ENCODE measurements at regions of chr20 and their contacts with region 1.

Region 1: DNA sequence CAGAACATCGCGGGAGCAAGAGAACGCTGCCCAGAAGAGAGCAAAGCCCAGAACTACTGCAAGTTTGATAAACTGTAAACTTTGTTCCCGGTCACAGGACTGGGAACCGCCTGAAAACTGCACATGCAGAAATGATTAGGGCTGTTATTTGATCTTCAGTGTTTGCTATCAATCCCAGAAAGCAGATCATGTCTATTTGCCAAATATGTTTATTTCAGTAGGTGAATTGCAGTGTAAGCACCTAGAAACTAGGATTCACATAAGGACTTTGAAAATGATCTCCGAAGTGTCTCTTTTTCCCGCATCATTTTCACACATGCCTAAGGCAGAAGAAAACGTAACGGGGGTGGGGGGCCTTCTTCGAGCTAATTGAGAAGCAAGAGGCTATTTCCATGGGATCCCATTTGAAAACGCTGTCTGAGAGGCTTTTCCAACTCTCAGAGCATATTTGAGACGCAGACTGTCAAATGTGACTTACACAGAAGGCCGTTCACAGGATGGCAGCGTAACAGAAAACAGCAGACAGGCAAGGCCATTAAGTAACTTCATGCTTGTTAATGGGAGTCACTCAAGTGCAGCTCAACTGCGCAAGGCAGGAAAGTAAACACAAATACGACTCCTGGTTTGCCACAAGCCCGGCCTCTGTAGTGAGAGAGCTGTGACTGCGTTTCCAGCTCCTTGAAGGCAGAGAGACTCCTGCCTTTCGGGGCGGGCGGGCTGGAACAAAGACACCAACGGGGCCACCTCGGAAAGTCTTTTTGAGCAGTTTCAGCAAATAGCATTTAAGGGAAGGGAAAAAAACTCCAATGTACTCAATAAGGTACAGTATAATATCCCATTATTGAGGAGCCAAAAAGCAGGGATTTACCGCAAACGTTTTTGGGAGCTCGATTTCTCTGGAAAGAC is 144.7 kb upstream of the ZNF217 start:
- DNase-seq: peak; percentile 85 to 97
- H3K4me3 ChIP-seq: peak overlapping the region; percentile 62
- H3K27ac ChIP-seq: peak overlapping the region; percentile 98
- H3K4me1 ChIP-seq: peaks cover 89% of the 10 kb centered on the region
- H3K27me3 ChIP-seq: no peaks in the 10 kb centered on the region
- CTCF ChIP-seq: no peak

Region 2: GRCh38 chr20:53578492-53579222 is 159.6 kb before region 1 on chr20:
- CTCF ChIA-PET with region 1: no interaction called
- POLR2A ChIA-PET with region 1: interaction called, 5 read pairs
- intact Hi-C with region 1: loop called (anchors 1 kb)
- DNase-seq: peak; percentile 61 to 77
- H3K4me3 ChIP-seq: peak overlapping the region; percentile 49
- H3K27ac ChIP-seq: peak overlapping the region; percentile 91
- H3K4me1 ChIP-seq: peaks cover 64% of the 10 kb centered on the region
- H3K27me3 ChIP-seq: no peaks in the 10 kb centered on the region
- CTCF ChIP-seq: peak; percentile 96

Region 3: GRCh38 chr20:53656293-53657202 is 81.7 kb before region 1 on chr20:
- CTCF ChIA-PET with region 1: no interaction called
- POLR2A ChIA-PET with region 1: interaction called, 10 read pairs
- intact Hi-C with region 1: no loop called
- DNase-seq: peak in 1 of 2 experiments; percentile 78
- H3K4me3 ChIP-seq: peak overlapping the region; percentile 12; the same call in 1 of the 2 replicates
- H3K27ac ChIP-seq: peak overlapping the region; percentile 84
- H3K4me1 ChIP-seq: peaks cover 65% of the 10 kb centered on the region
- H3K27me3 ChIP-seq: no peaks in the 10 kb centered on the region
- CTCF ChIP-seq: no peak

Region 4: DNA sequence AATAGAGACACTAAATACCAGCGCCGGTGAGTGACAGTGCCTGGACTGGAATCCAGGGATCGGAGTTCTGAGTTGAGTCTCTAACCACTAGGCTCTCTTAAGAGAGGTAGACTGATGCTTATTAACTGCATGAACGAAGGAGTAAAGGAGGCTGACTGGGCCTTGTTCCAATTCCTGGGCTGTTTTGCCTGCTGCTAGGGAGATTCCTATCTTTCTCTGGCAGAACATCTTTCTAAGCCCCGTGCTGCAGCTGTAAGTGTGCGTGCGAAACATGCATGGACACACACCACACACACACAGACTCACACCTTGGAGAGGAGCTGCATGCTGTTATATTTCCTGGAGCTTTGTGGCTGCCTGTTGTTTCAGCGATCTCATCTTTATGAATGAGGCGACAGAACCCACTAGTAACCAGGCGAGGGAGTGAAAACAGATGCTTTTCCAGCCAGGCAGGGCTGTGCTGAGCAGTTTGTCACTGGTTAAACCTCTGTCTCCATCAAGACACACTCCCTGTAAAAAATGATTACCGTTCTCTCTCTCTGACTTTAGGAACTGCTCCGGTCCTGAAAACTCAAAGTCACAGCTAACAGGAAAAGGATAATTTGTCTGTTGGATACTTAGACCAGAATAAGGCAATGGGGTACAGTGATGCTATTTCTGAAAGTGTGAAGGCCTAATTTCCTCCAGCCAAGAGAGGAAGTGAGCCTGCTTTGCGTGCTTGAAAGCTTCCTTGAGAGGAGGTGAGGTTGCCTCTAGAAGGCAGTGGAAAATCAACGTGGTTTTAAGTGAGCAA is 12.7 kb after region 1 on chr20:
- CTCF ChIA-PET with region 1: no interaction called
- POLR2A ChIA-PET with region 1: interaction called, 14 read pairs
- intact Hi-C with region 1: loop called (anchors 1 kb)
- DNase-seq: no peak
- H3K4me3 ChIP-seq: no peak overlapping the region
- H3K27ac ChIP-seq: peak overlapping the region; percentile 98
- H3K4me1 ChIP-seq: peaks cover 83% of the 10 kb centered on the region
- H3K27me3 ChIP-seq: no peaks in the 10 kb centered on the region
- CTCF ChIP-seq: no peak

Region 5: GRCh38 chr20:53828682-53829254 is 90.5 kb after region 1 on chr20:
- CTCF ChIA-PET with region 1: no interaction called
- POLR2A ChIA-PET with region 1: interaction called, 6 read pairs
- intact Hi-C with region 1: loop called (anchors 1 kb)
- DNase-seq: peak in 1 of 2 experiments; percentile 49
- H3K4me3 ChIP-seq: peak overlapping the region; percentile 56
- H3K27ac ChIP-seq: peak overlapping the region; percentile 100
- H3K4me1 ChIP-seq: peaks cover 55% of the 10 kb centered on the region
- H3K27me3 ChIP-seq: no peaks in the 10 kb centered on the region
- CTCF ChIP-seq: peak; percentile 46

Region 6: DNA sequence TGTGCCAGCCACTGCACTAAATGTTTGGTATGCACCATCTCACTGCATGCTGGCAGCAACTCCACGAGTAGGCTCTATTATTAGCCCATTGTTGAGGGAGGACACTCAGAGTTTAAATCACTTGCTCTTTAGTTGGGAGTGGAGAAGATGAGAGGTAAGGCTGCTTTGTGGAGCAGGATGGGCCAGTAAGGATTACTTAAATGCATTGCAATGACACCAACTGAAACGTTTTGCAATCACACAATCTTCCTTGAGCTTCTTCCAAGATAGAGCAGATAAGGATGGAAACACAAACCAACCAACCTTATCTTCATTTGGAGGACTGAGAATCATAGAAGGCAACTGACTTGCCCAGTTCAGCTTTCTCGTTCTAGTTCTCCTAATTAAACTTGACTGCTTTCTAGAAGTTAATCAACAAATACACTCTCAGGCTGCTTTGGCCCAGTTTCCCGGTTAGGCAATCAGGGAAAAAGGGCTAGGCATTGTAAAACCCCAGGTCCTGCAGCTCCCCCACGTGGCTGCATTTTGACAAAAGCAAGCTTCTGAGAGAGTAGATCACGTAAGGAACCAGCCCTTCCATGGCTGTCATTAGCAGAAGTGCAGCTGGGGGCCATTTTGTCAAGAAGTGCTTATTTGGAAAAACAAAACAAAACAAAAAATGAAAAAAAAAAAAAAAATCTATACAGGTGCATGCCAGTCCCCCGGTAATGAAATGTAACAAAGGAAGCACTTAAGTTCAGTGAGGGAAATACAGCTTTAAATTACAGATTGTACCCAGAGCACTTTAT is 201.5 kb after region 1 on chr20:
- CTCF ChIA-PET with region 1: interaction called, 6 read pairs
- POLR2A ChIA-PET with region 1: interaction called, 3 read pairs
- intact Hi-C with region 1: loop called (anchors 5 kb)
- DNase-seq: peak; percentile 89 to 90
- H3K4me3 ChIP-seq: no peak overlapping the region
- H3K27ac ChIP-seq: peak overlapping the region; percentile 65
- H3K4me1 ChIP-seq: peaks cover 26% of the 10 kb centered on the region
- H3K27me3 ChIP-seq: no peaks in the 10 kb centered on the region
- CTCF ChIP-seq: peak; percentile 96

Measured in PC-9 (cell line).